CD8-positive, alpha-beta T cell (primary cell): ENCODE measurements at regions of chr2 and their contacts with region 1.

Region 1: DNA sequence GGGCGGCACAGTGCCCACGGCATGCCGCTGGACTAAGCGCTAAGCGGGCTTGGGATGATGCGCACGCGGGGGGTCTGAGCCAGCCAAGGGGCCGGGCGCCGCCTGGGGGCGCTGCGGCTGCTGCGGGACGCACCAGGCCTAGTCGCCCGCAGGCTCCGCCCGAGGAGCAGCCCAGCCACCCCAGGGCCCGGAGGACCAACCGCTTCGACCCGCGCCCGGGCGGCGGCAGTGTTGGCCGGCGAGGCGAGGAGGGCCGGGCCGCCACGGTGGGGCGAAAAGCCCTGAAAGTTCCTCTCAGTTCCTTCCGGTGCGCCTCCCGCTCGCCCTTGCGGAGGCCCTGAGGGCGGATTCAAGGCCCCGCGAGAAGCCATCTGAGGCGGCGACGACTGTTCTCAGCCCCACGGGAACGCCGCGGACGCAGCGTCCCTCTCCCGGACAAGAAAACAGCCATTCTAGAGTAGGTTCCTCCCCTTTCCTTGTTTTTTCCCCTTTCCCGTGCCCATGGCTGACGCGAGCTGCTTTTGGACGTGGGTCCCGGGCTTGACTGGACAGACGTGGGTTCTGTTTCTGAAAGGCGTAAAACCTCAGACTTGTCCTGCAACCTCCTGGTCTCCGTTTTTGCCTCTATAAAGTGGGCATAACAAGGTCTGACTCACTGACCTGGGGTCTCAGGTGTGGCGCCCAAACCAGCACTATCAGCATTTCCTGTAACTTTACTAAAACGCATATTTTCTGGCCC is at the start of gene ANKAR:
- DNase-seq: peak; percentile 64 to 91 (median 79)
- ATAC-seq: peak; percentile 91
- H3K4me3 ChIP-seq: peak within 1 kb of the TSS; percentile 81 to 88
- H3K4me3 Mint-ChIP-seq: peak within 1 kb of the TSS; percentile 91
- H3K27ac ChIP-seq: peak within 1 kb of the TSS; percentile 86 to 97
- H3K27ac Mint-ChIP-seq: peak within 1 kb of the TSS; percentile 99
- H3K4me1 ChIP-seq: peaks cover 11% of the 10 kb centered on the region
- H3K4me1 Mint-ChIP-seq: peaks cover 49% of the 10 kb centered on the region
- H3K27me3 ChIP-seq: no peaks in the 10 kb centered on the region
- H3K27me3 Mint-ChIP-seq: no peaks in the 10 kb centered on the region
- CTCF ChIP-seq: peak; percentile 72
- total RNA-seq, gene ANKAR: 7.3 to 9.2 TPM

Region 2: GRCh38 chr2:189412330-189412953 is 262.1 kb before region 1 on chr2:
- CTCF ChIA-PET with region 1: no interaction called
- POLR2A ChIA-PET with region 1: no interaction called
- intact Hi-C with region 1: no loop called
- DNase-seq: peak in 7 of 9 experiments; percentile 29 to 68 (median 52)
- ATAC-seq: no peak
- H3K4me3 ChIP-seq: no peak overlapping the region
- H3K4me3 Mint-ChIP-seq: no peak overlapping the region
- H3K27ac ChIP-seq: no peak overlapping the region
- H3K27ac Mint-ChIP-seq: no peak overlapping the region
- H3K4me1 ChIP-seq: peaks cover 4% of the 10 kb centered on the region
- H3K4me1 Mint-ChIP-seq: peaks cover 7% of the 10 kb centered on the region
- H3K27me3 ChIP-seq: no peaks in the 10 kb centered on the region
- H3K27me3 Mint-ChIP-seq: no peaks in the 10 kb centered on the region
- CTCF ChIP-seq: peak; percentile 86

Region 3: GRCh38 chr2:189569295-189569910 is 105.1 kb before region 1 on chr2:
- CTCF ChIA-PET with region 1: no interaction called
- POLR2A ChIA-PET with region 1: no interaction called
- intact Hi-C with region 1: no loop called
- DNase-seq: no peak
- ATAC-seq: no peak
- H3K4me3 ChIP-seq: no peak overlapping the region
- H3K4me3 Mint-ChIP-seq: no peak overlapping the region
- H3K27ac ChIP-seq: no peak overlapping the region
- H3K27ac Mint-ChIP-seq: peak overlapping the region; percentile 76
- H3K4me1 ChIP-seq: peaks cover 8% of the 10 kb centered on the region
- H3K4me1 Mint-ChIP-seq: peaks cover 20% of the 10 kb centered on the region
- H3K27me3 ChIP-seq: no peaks in the 10 kb centered on the region
- H3K27me3 Mint-ChIP-seq: peaks cover 2% of the 10 kb centered on the region
- CTCF ChIP-seq: no peak

Region 4: DNA sequence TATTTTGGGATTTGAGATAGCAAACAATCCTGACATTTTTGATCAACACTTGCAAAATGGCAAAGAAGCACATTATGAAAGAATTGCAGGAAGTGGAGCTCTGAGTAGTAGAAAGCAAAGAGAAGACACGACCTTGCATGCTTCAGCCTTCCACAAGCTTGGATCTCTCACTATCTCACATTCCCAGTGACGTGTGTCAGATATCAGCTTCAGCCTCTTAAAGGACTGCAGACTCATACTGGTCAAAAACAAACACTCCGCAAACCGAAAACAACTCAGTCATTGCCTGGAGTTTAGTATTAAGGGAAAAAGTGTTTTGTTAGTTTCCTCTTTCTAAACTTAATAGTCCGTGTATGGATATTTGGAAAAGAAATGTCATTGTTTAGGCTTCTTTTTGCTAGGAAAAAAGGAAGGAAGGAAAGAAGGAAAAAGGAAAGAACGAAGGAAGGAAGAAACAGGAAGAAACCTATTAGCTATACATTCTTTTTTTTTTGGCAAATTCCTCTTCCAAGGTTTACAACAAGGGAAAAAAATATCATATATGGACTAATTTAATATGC is 61.4 kb before region 1 on chr2:
- CTCF ChIA-PET with region 1: no interaction called
- POLR2A ChIA-PET with region 1: no interaction called
- intact Hi-C with region 1: no loop called
- DNase-seq: no peak
- ATAC-seq: no peak
- H3K4me3 ChIP-seq: no peak overlapping the region
- H3K4me3 Mint-ChIP-seq: no peak overlapping the region
- H3K27ac ChIP-seq: no peak overlapping the region
- H3K27ac Mint-ChIP-seq: no peak overlapping the region
- H3K4me1 ChIP-seq: no peaks in the 10 kb centered on the region
- H3K4me1 Mint-ChIP-seq: no peaks in the 10 kb centered on the region
- H3K27me3 ChIP-seq: no peaks in the 10 kb centered on the region
- H3K27me3 Mint-ChIP-seq: no peaks in the 10 kb centered on the region
- CTCF ChIP-seq: no peak

Region 5: DNA sequence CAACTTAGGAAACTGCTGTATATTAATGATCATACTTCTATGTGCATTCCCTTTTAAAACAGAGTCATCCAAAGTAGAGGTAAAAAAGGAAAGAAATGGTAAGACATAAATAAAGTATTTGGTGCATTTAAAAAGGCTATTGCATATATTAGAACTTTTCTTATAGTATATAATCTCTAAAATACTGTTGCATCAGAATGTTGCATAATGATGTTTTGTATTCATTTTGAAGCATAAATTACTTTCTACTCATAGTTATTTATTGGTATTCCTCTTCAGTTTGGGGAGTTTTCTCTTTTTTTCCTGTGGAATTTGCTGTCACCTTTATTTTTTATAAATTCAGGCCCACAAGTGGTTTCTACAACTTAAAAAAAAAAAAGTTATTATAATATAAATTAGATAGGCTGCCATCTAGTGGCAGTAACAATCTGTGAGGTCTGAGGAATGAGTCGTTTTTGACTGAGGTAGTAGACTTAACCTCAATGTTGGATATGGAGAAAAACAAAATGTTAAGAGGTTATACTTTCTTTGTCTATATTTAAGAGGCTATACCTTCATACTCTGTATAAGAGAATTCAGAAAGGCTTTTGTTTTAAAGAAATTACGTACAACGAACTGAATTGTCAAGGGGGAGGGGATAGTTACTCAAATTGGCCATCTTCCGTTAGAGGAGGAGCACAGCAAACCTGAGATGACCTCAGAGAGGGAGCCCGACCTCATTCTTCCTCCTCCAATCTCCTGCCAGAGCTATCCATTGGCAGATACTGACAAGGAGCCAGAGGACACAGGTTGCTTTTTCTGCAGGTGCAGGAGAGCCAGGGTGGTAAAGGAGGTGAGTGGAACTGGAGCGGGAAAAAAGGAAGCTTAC is 23.7 kb after region 1 on chr2:
- CTCF ChIA-PET with region 1: interaction called, 19 read pairs
- POLR2A ChIA-PET with region 1: interaction called, 3 read pairs
- intact Hi-C with region 1: loop called (anchors 1 kb)
- DNase-seq: peak in 6 of 9 experiments; percentile 14 to 76 (median 46)
- ATAC-seq: peak; percentile 66
- H3K4me3 ChIP-seq: no peak overlapping the region
- H3K4me3 Mint-ChIP-seq: peak overlapping the region; percentile 53
- H3K27ac ChIP-seq: no peak overlapping the region
- H3K27ac Mint-ChIP-seq: peak overlapping the region; percentile 6
- H3K4me1 ChIP-seq: no peaks in the 10 kb centered on the region
- H3K4me1 Mint-ChIP-seq: peaks cover 5% of the 10 kb centered on the region
- H3K27me3 ChIP-seq: no peaks in the 10 kb centered on the region
- H3K27me3 Mint-ChIP-seq: no peaks in the 10 kb centered on the region
- CTCF ChIP-seq: peak; percentile 80

Region 6: DNA sequence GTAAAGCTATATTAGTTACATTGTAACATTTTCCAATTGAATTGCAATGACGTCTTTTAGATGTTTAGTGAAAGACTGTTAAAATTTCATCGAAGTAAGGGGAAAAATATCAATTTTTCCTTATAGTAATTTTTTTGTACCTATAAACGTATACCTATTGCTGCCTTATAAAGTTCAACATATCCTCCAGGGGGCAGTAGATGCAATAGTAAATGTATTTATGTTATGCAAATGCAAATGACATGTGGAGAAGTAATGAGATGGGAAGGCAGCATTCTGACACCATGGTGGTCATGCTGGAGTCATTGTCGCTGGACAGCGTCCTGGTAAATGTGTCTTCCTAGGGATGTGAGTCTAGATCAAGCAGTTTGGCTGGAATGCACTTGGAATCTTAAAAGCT is 349.3 kb after region 1 on chr2:
- CTCF ChIA-PET with region 1: no interaction called
- POLR2A ChIA-PET with region 1: no interaction called
- intact Hi-C with region 1: no loop called
- DNase-seq: peak in 2 of 9 experiments; percentile 42 to 54
- ATAC-seq: no peak
- H3K4me3 ChIP-seq: no peak overlapping the region
- H3K4me3 Mint-ChIP-seq: no peak overlapping the region
- H3K27ac ChIP-seq: no peak overlapping the region
- H3K27ac Mint-ChIP-seq: no peak overlapping the region
- H3K4me1 ChIP-seq: no peaks in the 10 kb centered on the region
- H3K4me1 Mint-ChIP-seq: no peaks in the 10 kb centered on the region
- H3K27me3 ChIP-seq: no peaks in the 10 kb centered on the region
- H3K27me3 Mint-ChIP-seq: peaks cover 17% of the 10 kb centered on the region
- CTCF ChIP-seq: peak; percentile 64